Activated naive CD4-positive, alpha-beta T cell treated with anti-CD3 and anti-CD28 coated beads for 36 hours (primary cell): ENCODE measurements at regions of chr6 and their contacts with region 1.

Region 1: DNA sequence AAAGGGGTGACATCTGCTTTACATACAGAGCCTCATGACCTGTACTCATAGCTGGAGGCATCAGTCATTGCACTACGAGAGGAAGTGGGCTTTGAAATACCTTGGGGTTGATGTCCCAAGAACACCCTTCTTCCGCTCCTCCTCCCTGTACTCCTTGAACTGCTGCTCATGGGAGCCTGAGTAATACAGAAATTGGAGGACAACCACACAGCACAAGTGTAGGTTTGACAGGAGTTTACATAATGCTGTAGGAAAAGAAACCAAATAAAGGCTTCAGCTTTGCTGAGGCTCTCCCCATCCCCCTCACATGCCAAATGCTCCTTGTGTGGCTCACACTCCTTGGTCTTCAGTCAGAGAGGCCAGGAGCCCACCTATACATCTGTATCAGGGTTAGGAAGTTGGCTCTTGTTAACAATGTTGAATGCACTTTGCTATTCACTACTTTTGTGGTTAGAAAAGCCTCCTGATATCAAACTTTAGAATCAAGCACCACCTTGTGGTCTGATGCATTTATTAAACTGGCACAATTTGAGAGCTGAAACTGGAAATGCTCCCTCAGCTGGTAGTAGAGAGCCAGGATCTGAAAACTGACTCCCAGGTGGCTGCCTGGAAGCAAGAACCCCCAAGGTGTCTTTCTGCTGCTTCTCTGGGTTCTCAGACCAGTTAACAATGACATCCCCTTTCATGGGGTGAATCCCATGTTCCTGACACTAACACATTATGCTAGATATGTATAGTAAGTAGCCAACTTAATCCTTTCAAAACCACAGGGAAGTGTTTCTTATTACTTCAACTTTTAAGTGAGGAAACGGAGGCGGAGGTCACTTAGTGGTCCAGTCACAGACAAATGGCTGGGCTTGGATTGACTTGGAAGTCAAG is 56.2 kb upstream of the EDN1 start:
- DNase-seq: peak; percentile 53
- H3K4me3 Mint-ChIP-seq: no peak overlapping the region
- H3K27ac Mint-ChIP-seq: no peak overlapping the region
- H3K4me1 Mint-ChIP-seq: peaks cover 31% of the 10 kb centered on the region
- H3K27me3 Mint-ChIP-seq: no peaks in the 10 kb centered on the region

Region 2: DNA sequence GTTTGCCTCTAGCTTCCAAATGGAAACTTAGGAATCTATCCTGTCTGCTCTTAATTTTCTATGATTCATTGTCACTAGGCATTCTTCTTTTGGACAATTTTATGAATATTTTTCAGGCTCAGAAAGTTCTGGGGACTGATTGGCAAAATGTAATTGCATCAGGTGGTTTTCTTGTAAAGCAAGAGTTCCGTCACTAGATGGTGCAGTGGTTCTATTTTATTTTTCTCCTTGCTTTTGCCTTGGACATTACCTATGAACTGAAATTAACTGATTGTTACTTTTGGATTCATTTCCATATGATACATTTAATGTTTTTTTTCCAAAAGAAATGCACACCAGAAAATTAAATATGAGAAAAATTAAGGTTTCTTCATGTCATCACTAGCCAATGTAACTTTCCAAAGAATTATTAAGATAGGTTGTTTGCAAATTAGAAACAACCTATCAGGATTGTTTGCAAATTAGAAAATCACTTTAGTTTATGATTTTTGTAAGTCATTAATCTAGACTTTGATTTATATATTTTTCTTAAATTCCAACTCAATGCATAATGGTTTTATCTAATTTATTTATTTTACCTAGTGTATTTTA is 648.4 kb before region 1 on chr6:
- CTCF ChIA-PET with region 1: no interaction called
- intact Hi-C with region 1: loop called (anchors 1 kb)
- DNase-seq: peak; percentile 14
- H3K4me3 Mint-ChIP-seq: no peak overlapping the region
- H3K27ac Mint-ChIP-seq: no peak overlapping the region
- H3K4me1 Mint-ChIP-seq: no peaks in the 10 kb centered on the region
- H3K27me3 Mint-ChIP-seq: no peaks in the 10 kb centered on the region

Region 3: DNA sequence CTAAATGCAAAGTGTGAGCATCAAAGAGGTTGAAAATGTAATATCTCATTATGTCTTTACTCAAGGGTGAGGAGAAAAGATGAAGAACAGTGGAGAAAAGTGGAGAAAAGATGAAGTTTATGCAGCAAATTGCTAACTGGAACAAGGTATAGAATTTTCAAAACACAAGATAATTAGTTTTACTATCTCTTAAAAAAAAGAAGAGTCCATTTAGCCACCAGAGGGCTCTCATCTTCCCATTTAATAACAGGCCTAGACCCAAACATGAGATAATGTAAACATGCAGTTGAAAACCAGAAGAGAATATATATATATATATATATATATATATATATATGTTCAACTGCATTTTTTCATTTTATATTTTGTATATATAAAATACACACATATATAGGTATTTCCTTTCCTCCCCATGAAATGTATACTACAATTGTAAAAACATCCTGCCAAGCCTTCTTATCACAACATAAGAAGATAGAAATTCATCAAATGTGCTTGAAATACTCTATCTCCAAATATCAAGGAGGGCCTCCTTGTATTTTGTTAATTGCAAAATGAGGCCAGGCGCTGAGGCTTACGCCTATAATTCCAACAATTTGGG is 533.7 kb before region 1 on chr6:
- CTCF ChIA-PET with region 1: interaction called, 7 read pairs
- intact Hi-C with region 1: loop called (anchors 1 kb)
- DNase-seq: no peak
- H3K4me3 Mint-ChIP-seq: no peak overlapping the region
- H3K27ac Mint-ChIP-seq: no peak overlapping the region
- H3K4me1 Mint-ChIP-seq: peaks cover 28% of the 10 kb centered on the region
- H3K27me3 Mint-ChIP-seq: no peaks in the 10 kb centered on the region

Region 4: GRCh38 chr6:11732036-11732631 is 501.8 kb before region 1 on chr6:
- CTCF ChIA-PET with region 1: interaction called, 3 read pairs
- intact Hi-C with region 1: loop called (anchors 2 kb)
- DNase-seq: peak; percentile 87
- H3K4me3 Mint-ChIP-seq: peak overlapping the region; percentile 3
- H3K27ac Mint-ChIP-seq: peak overlapping the region; percentile 92
- H3K4me1 Mint-ChIP-seq: peaks cover 63% of the 10 kb centered on the region
- H3K27me3 Mint-ChIP-seq: no peaks in the 10 kb centered on the region

Region 5: GRCh38 chr6:11912426-11912825 is 321.5 kb before region 1 on chr6:
- CTCF ChIA-PET with region 1: no interaction called
- intact Hi-C with region 1: loop called (anchors 2 kb)
- DNase-seq: peak; percentile 35
- H3K4me3 Mint-ChIP-seq: no peak overlapping the region
- H3K27ac Mint-ChIP-seq: no peak overlapping the region
- H3K4me1 Mint-ChIP-seq: peaks cover 2% of the 10 kb centered on the region
- H3K27me3 Mint-ChIP-seq: no peaks in the 10 kb centered on the region

Region 6: GRCh38 chr6:12051861-12052368 is 182.0 kb before region 1 on chr6:
- CTCF ChIA-PET with region 1: no interaction called
- intact Hi-C with region 1: loop called (anchors 5 kb)
- DNase-seq: peak; percentile 83
- H3K4me3 Mint-ChIP-seq: peak overlapping the region; percentile 36
- H3K27ac Mint-ChIP-seq: peak overlapping the region; percentile 88
- H3K4me1 Mint-ChIP-seq: peaks cover 76% of the 10 kb centered on the region
- H3K27me3 Mint-ChIP-seq: no peaks in the 10 kb centered on the region

Region 7: DNA sequence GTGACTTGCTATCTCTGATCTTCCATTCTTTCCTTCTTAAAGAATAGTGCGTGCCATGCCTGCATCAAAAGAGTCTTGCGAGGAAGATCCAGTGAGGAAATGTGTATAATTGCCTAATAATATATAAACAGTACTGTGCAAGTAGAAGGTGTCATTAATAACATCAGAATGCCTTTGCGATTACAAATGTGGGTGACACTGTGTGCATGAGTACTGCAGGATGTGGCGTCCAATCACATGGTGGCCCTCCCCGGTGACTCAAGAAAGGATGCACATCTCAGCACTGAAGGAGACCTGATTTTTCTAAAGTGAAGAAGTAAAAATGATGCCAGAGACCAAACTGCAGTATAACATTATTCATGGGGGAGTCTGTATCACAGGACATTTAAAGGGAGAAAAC is 51.3 kb before region 1 on chr6:
- CTCF ChIA-PET with region 1: no interaction called
- intact Hi-C with region 1: no loop called
- DNase-seq: peak; percentile 17
- H3K4me3 Mint-ChIP-seq: no peak overlapping the region
- H3K27ac Mint-ChIP-seq: no peak overlapping the region
- H3K4me1 Mint-ChIP-seq: peaks cover 12% of the 10 kb centered on the region
- H3K27me3 Mint-ChIP-seq: no peaks in the 10 kb centered on the region

Region 8: DNA sequence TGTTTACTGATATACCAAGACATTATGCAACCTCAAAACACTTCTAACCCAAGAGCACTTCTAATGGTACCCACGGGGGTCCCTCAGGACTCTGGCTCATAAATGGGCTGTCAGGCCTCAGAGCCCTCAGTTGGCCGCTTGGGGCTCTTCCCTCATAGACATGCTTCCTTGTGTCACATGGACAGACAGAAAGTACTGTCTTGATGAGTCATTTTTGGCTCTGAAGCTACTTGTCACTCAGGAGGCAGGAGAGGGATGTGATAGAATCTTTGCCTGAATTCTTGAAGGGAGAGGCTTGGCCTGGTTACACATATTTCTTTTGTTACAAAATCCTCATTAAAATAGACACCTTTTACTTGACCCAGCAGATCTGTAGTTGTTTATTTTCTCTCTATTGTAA is 41.2 kb after region 1 on chr6:
- CTCF ChIA-PET with region 1: no interaction called
- intact Hi-C with region 1: no loop called
- DNase-seq: no peak
- H3K4me3 Mint-ChIP-seq: no peak overlapping the region
- H3K27ac Mint-ChIP-seq: no peak overlapping the region
- H3K4me1 Mint-ChIP-seq: peaks cover 11% of the 10 kb centered on the region
- H3K27me3 Mint-ChIP-seq: no peaks in the 10 kb centered on the region

Region 9: DNA sequence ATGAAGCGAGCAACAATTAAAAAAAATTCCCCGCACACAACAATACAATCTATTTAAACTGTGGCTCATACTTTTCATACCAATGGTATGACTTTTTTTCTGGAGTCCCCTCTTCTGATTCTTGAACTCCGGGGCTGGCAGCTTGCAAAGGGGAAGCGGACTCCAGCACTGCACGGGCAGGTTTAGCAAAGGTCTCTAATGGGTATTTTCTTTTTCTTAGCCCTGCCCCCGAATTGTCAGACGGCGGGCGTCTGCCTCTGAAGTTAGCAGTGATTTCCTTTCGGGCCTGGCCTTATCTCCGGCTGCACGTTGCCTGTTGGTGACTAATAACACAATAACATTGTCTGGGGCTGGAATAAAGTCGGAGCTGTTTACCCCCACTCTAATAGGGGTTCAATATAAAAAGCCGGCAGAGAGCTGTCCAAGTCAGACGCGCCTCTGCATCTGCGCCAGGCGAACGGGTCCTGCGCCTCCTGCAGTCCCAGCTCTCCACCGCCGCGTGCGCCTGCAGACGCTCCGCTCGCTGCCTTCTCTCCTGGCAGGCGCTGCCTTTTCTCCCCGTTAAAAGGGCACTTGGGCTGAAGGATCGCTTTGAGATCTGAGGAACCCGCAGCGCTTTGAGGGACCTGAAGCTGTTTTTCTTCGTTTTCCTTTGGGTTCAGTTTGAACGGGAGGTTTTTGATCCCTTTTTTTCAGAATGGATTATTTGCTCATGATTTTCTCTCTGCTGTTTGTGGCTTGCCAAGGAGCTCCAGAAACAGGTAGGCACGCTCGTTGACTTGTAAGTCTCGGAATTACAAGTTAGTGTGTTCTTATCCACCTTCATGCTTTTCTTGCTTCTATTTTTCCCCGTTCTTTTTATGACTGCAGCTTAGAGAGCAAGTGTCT is 56.2 kb after region 1 on chr6 and contains the start of gene EDN1:
- CTCF ChIA-PET with region 1: interaction called, 9 read pairs
- intact Hi-C with region 1: loop called (anchors 1 kb)
- DNase-seq: peak; percentile 76
- H3K4me3 Mint-ChIP-seq: peak within 1 kb of the TSS; percentile 79
- H3K27ac Mint-ChIP-seq: no peak within 1 kb of the TSS
- H3K4me1 Mint-ChIP-seq: peaks cover 14% of the 10 kb centered on the region
- H3K27me3 Mint-ChIP-seq: peaks cover 26% of the 10 kb centered on the region
- total RNA-seq, gene EDN1: 0.15 to 0.24 TPM